ENCODE measurements at regions of chr10 and their contacts with region 1.

Region 1: GRCh38 chr10:6202684-6203330 is at the start of gene PFKFB3:
- DNase-seq: peak; percentile 89
- H3K4me3 Mint-ChIP-seq: peak within 1 kb of the TSS; percentile 100
- H3K27ac Mint-ChIP-seq: peak within 1 kb of the TSS; percentile 93
- H3K4me1 Mint-ChIP-seq: peaks cover 31% of the 10 kb centered on the region
- H3K27me3 Mint-ChIP-seq: no peaks in the 10 kb centered on the region
- total RNA-seq, gene PFKFB3: 124 and 126 TPM in 2 replicates

Region 2: GRCh38 chr10:5800790-5801189 is 402.0 kb before region 1 on chr10:
- intact Hi-C with region 1: no loop called
- DNase-seq: no peak
- H3K4me3 Mint-ChIP-seq: no peak overlapping the region
- H3K27ac Mint-ChIP-seq: peak overlapping the region; percentile 33
- H3K4me1 Mint-ChIP-seq: peaks cover 19% of the 10 kb centered on the region
- H3K27me3 Mint-ChIP-seq: no peaks in the 10 kb centered on the region

Region 3: DNA sequence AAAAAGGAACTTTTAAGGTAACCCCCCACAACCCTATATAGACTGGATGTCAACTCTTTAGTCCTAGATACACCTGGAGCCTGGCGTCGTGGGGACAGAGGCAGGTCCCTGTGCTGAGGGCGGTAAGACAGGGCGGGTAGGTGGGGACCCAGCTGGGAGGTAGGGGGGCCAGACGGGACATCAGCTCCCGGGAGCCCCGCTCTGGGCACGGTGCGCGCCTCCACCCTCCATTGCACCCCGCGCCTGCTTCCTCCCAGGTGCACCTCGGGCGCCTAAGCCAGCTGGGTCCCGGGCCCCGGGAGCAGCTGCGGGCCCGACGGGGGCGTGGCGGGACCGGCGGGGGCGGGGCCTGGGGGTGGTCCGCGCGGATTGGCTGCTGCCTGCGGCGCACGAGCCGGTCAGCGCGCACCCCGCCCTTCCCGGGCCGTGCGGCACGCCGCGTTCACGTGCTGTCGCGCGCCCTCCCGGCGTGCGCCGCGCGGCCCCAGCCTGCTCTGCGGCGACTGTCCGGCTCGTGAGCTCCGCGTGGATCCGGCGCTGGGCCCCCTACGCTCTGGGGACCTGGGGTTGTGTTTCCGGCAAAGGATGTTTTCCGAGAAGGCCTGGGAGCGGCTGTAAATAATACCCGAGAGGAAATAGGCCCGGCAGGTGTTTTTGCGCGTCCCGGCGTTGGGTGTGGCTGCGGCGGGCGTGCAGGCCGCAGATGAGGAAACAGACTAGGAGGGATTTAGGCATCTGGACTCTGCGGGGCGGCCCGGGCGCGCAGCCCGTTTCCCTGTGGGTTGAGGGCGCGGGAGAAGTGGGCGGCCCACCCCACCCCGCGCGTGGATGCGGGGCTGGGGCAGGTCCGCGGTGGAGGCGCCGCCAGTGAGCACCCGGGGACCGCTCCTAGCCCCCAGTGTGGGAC is 39.2 kb before region 1 on chr10:
- intact Hi-C with region 1: loop called (anchors 2 kb)
- DNase-seq: peak; percentile 90
- H3K4me3 Mint-ChIP-seq: peak overlapping the region; percentile 92
- H3K27ac Mint-ChIP-seq: peak overlapping the region; percentile 89
- H3K4me1 Mint-ChIP-seq: peaks cover 45% of the 10 kb centered on the region
- H3K27me3 Mint-ChIP-seq: no peaks in the 10 kb centered on the region

Region 4: DNA sequence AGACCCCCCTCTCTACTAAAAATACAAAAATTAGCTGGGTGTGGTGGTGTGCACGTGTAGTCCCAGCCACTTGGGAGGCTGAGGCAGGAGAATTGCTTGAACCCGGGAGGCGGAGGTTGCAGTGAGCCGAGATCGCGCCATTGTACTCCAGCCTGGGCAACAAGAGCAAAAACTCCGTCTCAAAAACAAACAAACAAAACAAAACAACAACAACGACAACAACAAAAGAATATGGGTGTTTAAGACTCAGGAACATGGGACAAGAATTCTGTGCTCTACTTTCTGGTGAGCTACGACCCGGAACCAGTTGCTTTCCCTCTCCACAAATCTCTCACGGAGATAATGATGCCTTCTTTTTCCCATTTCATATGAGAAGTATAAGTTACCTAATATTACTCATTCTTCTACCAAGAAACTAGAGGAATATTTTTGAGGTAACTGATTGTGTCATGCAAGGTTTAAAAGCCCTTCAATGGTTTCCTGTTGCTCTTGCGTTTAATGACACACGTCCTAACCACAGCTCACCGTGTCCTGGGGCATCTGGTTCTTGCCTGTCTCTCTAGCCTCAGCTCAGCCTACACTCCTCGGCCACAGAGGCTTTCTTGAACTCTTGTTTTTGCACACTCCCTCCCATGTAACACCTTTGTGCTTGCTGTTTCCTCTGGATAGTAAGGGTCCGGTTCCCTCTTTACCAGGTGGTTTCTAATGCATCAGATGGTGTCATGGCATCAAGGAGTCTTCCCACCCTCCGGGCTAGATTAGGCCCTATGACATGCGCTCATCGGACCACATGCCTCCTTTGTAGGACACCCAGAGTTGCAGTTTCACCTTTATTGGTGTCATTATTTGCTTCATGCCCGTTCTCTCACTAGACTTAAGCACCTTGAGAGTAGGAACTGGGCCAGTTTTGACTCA is 67.4 kb after region 1 on chr10:
- intact Hi-C with region 1: loop called (anchors 1 kb)
- DNase-seq: peak; percentile 73
- H3K4me3 Mint-ChIP-seq: peak overlapping the region; percentile 22
- H3K27ac Mint-ChIP-seq: peak overlapping the region; percentile 89
- H3K4me1 Mint-ChIP-seq: peaks cover 58% of the 10 kb centered on the region
- H3K27me3 Mint-ChIP-seq: no peaks in the 10 kb centered on the region

Region 5: DNA sequence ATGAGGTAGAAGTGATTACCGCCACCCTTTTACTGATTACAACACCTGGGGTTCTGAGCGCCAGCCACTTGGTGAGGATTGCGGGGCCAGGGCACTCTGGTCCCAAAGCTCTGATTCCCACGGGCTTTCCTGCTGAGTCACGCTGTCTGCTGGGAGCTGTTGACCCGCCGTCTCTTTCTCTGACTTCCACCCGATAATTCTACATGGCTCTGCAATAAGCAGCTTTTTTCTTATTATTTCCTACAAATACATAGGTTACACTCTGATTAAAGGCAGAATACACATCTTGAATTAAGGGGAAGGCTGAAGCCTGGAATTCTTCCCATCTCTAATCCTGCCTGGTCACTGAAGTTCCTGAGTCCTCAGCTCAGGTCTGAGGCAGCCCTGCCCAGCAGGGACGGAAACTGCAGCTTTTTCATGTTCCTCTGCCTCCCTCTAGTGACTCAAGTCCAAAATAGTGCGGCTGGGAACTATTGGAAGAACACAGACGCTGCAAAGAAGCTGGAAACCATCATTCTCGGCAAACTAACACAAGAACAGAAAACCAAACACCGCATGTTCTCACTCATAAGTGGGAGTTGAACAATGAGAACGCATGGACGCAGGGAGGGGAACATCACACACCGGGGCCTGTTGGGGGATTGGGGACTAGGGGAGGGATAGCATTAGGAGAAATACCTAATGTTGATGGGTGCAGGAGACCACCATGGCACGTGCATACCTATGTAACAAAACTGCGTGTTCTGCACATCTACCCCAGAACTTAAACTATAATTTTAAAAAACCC is 198.9 kb after region 1 on chr10:
- intact Hi-C with region 1: loop called (anchors 1 kb)
- DNase-seq: peak; percentile 47
- H3K4me3 Mint-ChIP-seq: no peak overlapping the region
- H3K27ac Mint-ChIP-seq: no peak overlapping the region
- H3K4me1 Mint-ChIP-seq: peaks cover 37% of the 10 kb centered on the region
- H3K27me3 Mint-ChIP-seq: peaks cover 11% of the 10 kb centered on the region